ENCODE measurements at regions of chr10 and their contacts with region 1.

Region 1: DNA sequence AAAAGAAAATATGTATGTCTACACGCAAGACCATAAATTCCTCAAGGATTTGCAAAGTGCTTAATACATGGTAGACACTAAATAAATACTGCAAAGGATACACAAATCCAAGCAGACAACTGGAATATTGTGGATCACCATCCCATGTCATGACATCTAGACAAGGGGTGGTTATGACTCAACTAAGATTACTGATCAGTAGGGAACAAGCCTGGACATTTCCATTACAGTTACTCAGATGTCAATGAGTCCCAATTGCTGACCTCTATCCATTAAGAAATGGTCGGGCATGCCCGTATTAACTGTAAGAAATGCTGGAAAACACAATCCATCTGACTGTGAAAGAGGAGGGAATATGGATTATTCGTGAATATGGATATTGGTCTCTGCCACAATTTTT is 27.6 kb upstream of the RUFY2 start:
- DNase-seq: peak; percentile 72
- H3K4me3 ChIP-seq: no peak overlapping the region
- H3K27ac ChIP-seq: no peak overlapping the region
- H3K4me1 ChIP-seq: peaks cover 9% of the 10 kb centered on the region
- H3K27me3 ChIP-seq: no peaks in the 10 kb centered on the region
- CTCF ChIP-seq: no peak

Region 2: GRCh38 chr10:68471586-68472408 is 37.1 kb after region 1 on chr10 and contains the start of gene DNA2:
- CTCF ChIA-PET with region 1: no interaction called
- dilution Hi-C with region 1: loop called (anchors 5 kb)
- in situ Hi-C with region 1: no loop called
- intact Hi-C with region 1: no loop called
- DNase-seq: peak; percentile 75
- H3K4me3 ChIP-seq: peak within 1 kb of the TSS; percentile 80 to 94 (median 83)
- H3K27ac ChIP-seq: peak within 1 kb of the TSS; percentile 82
- H3K4me1 ChIP-seq: peaks cover 5% of the 10 kb centered on the region
- H3K27me3 ChIP-seq: no peaks in the 10 kb centered on the region
- CTCF ChIP-seq: no peak
- total RNA-seq, gene DNA2: 3.8 to 10.3 TPM

Region 3: DNA sequence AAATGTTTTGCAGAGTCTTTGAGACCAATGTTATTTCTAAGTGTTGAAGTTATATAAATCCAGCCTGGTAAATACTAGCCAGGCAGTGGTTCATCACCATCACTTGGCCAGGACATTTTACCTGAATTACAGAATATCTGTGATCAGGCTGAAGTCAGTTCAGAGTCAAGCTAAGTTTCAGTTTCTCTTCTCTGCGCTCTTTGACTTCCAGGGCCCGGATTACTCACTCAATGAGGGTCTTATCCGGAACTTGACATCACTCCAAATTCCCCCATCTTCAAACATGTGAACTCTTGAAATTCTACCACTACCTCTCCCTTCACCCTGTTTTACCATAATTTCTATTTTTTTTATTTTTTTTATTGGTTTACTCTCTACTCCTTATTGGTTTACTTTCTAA is 249.8 kb after region 1 on chr10:
- CTCF ChIA-PET with region 1: no interaction called
- dilution Hi-C with region 1: no loop called
- in situ Hi-C with region 1: no loop called
- intact Hi-C with region 1: no loop called
- DNase-seq: no peak
- H3K4me3 ChIP-seq: no peak overlapping the region
- H3K27ac ChIP-seq: no peak overlapping the region
- H3K4me1 ChIP-seq: no peaks in the 10 kb centered on the region
- H3K27me3 ChIP-seq: no peaks in the 10 kb centered on the region
- CTCF ChIP-seq: no peak

Region 4: DNA sequence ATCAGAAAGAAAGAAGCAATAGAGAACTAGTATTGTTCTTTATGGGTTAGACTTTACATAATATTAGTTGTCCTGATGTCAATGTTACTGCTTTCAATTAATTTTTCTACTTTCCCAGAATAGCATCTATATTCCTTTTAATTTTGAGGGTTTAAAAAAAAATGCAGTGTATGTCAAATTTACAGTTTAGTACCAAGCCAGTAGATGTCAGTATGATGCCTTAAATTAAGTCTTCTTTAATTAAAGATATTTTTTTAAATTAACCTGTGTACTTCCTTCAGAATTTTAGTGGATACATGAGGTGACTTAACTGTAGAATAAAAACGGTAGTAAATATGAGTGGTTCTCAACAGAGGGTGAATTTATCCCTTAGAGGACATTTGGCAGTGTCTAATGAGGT is 357.5 kb after region 1 on chr10:
- CTCF ChIA-PET with region 1: no interaction called
- dilution Hi-C with region 1: no loop called
- in situ Hi-C with region 1: no loop called
- intact Hi-C with region 1: no loop called
- DNase-seq: no peak
- H3K4me3 ChIP-seq: no peak overlapping the region
- H3K27ac ChIP-seq: no peak overlapping the region
- H3K4me1 ChIP-seq: peaks cover 11% of the 10 kb centered on the region
- H3K27me3 ChIP-seq: no peaks in the 10 kb centered on the region
- CTCF ChIP-seq: peak; percentile 10 to 15

Measured in mammary epithelial cell (primary cell).